ENCODE measurements at regions of chr4 and their contacts with region 1.

Region 1: DNA sequence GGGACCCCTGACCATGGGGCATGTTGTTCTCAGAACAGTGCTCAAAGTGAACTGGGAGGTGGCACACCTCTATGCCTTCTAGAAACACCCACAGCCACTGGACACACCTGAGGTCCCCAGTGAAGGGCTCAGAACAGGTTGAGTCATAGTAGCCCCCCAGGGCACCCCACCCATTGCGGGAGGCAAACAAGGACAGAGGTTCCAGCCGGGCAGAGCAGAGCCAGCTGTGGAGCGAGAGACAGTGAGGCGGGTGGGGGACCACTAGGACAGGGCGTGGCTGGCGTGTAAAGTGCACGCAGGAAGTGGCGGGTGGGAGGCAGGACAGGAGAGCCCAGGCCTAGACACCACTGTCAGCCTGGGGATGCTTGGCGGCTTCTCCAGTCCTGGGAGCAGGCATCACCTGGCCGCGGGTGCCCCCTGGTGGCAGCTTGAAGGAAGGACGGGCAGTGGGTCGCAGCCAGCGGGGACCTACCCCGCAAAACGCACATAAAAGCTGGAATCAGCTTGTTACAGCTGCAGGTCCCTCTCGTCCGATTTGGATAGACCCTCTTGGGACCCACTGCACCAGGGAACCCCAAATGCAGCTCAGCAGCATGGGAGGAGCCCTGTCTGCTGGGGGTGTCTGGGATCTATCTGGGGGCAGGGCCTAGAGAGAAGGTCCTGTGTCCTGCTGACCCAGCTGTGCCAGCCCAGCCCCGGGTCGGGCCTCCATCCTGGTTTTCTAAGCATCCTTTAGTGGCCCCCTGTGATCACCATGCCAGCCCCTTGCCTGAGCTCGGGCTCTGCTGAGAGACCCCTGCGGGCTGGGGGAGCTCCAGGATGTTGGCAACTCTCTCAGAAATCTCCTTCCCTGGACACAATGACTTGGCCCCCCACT is 57.6 kb downstream of the WFS1 start:
- DNase-seq: peak; percentile 86
- H3K4me3 Mint-ChIP-seq: no peak overlapping the region
- H3K27ac Mint-ChIP-seq: no peak overlapping the region
- H3K4me1 Mint-ChIP-seq: no peaks in the 10 kb centered on the region
- H3K27me3 Mint-ChIP-seq: peaks cover 31% of the 10 kb centered on the region

Region 2: GRCh38 chr4:5998333-5998936 is 328.8 kb before region 1 on chr4:
- CTCF ChIA-PET with region 1: interaction called, 104 read pairs
- POLR2A ChIA-PET with region 1: no interaction called
- intact Hi-C with region 1: loop called (anchors 1 kb)
- DNase-seq: peak; percentile 63
- H3K4me3 Mint-ChIP-seq: no peak overlapping the region
- H3K27ac Mint-ChIP-seq: no peak overlapping the region
- H3K4me1 Mint-ChIP-seq: peaks cover 4% of the 10 kb centered on the region
- H3K27me3 Mint-ChIP-seq: peaks cover 3% of the 10 kb centered on the region

Region 3: DNA sequence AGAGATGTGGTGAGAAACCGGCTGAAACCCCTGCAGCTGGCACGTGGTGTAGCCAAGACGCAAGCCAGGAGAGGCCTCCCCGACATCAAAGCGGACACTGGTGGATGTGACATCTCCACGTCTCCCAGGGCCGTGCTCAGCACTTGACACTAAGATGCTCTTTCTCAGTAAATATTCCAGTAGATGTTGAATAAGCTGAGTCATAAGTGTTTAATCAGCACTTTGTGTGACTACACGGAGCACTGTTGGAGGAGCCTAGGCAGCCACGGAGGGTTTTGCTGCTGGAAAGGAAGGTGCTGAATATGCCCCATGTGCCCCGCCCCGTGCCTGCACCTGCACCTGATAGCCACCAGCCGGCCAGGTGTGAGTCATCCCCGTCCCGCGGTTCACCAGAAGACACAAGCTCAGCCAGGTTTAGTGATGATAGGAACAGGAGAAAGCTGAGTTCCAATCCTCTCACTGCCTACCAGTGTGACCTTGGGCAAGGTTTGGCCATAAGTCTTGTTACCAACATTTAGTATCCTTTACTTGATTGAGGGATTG is 280.1 kb before region 1 on chr4:
- CTCF ChIA-PET with region 1: no interaction called
- POLR2A ChIA-PET with region 1: no interaction called
- intact Hi-C with region 1: no loop called
- DNase-seq: peak; percentile 27
- H3K4me3 Mint-ChIP-seq: no peak overlapping the region
- H3K27ac Mint-ChIP-seq: no peak overlapping the region
- H3K4me1 Mint-ChIP-seq: peaks cover 5% of the 10 kb centered on the region
- H3K27me3 Mint-ChIP-seq: peaks cover 5% of the 10 kb centered on the region

Region 4: GRCh38 chr4:6250235-6250983 is 76.9 kb before region 1 on chr4:
- CTCF ChIA-PET with region 1: interaction called, 505 read pairs
- POLR2A ChIA-PET with region 1: interaction called, 5 read pairs
- intact Hi-C with region 1: loop called (anchors 1 kb)
- DNase-seq: no peak
- H3K4me3 Mint-ChIP-seq: no peak overlapping the region
- H3K27ac Mint-ChIP-seq: no peak overlapping the region
- H3K4me1 Mint-ChIP-seq: no peaks in the 10 kb centered on the region
- H3K27me3 Mint-ChIP-seq: peaks cover 24% of the 10 kb centered on the region

Region 5: GRCh38 chr4:6269616-6270511 is 57.4 kb before region 1 on chr4 and contains the start of gene WFS1:
- CTCF ChIA-PET with region 1: interaction called, 41 read pairs
- POLR2A ChIA-PET with region 1: no interaction called
- intact Hi-C with region 1: loop called (anchors 5 kb)
- DNase-seq: peak; percentile 99
- H3K4me3 Mint-ChIP-seq: peak within 1 kb of the TSS; percentile 73
- H3K27ac Mint-ChIP-seq: no peak within 1 kb of the TSS
- H3K4me1 Mint-ChIP-seq: peaks cover 8% of the 10 kb centered on the region
- H3K27me3 Mint-ChIP-seq: peaks cover 3% of the 10 kb centered on the region
- total RNA-seq, gene WFS1: 4.6 to 5.3 TPM

Region 6: DNA sequence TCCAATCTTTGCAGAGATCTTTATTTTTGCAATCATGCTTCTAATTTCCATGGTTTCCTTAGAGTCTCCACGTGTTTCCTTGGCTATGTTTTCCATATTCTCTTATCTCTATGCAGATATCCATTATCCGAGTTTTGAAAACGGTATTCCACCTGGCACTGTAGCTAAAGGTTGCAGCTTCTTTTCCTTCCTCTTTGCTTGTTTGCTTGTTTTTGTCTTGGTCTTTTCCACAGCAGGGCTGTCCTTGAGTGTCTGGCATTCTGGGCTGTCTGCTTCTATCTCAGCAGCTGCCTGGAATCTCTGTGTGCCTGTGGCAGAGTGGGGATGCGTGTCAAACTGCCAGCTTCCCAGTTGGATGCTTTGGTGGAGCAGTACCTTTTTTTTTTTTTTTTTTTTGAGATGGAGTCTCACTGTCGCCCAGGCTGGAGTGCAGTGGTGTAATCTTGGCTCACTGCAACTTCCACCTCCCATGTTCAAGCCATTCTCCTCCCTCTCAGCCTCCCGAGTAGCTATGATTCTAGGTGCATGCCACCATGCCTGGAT is 10.7 kb before region 1 on chr4:
- CTCF ChIA-PET with region 1: interaction called, 17 read pairs
- POLR2A ChIA-PET with region 1: interaction called, 3 read pairs
- intact Hi-C with region 1: no loop called
- DNase-seq: no peak
- H3K4me3 Mint-ChIP-seq: no peak overlapping the region
- H3K27ac Mint-ChIP-seq: no peak overlapping the region
- H3K4me1 Mint-ChIP-seq: peaks cover 4% of the 10 kb centered on the region
- H3K27me3 Mint-ChIP-seq: peaks cover 27% of the 10 kb centered on the region

Region 7: DNA sequence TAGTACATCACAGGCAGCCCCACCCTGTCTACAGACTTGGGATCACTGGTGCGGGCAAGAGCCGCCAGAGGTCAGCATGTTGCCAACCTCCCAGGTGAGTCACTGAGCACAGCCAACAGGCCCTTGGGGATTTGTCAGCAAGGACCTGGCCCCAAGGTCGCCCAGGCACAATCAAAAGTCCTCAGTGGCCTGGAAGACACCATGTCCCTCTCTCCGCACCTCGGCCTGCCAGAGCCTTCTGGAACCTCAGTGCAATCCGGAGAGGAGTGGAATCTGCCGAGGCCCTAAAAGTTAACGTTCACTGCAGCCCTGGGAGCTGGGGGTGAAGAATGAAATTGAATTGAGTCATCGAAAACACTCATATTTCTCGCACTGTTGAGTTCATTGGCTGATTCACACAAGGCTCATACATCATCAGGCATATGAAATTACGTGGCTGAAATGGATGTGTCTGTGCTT is 16.7 kb after region 1 on chr4:
- CTCF ChIA-PET with region 1: interaction called, 78 read pairs
- POLR2A ChIA-PET with region 1: no interaction called
- intact Hi-C with region 1: no loop called
- DNase-seq: no peak
- H3K4me3 Mint-ChIP-seq: no peak overlapping the region
- H3K27ac Mint-ChIP-seq: no peak overlapping the region
- H3K4me1 Mint-ChIP-seq: no peaks in the 10 kb centered on the region
- H3K27me3 Mint-ChIP-seq: no peaks in the 10 kb centered on the region